Adrenal gland (tissue), 19 donors: ENCODE measurements at regions of chr5 and their contacts with region 1.

Region 1: DNA sequence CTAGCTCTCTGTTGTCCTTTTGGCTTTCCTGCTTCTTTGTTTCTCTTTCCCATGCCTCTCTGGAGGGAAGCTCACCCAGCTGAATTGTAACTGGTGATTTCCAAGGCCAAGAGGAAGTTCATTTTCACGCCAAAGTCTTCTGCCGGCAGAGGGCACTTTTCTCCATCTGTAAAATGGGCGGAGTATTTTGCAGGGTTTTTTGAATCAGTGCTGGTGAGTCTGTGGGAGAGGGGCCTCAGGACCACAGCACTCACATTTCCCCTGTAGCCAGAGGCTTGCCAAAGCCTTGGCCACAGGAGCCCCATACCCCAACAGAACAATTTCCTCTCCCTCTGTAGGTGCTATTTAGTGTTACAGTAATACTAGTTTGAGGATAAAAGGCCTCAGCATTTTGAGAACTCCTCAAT is 42.3 kb upstream of the MATR3 start:
- DNase-seq: no peak
- H3K4me3 ChIP-seq: no peak overlapping the region
- H3K27ac ChIP-seq: no peak overlapping the region
- H3K4me1 ChIP-seq: no peaks in the 10 kb centered on the region
- H3K27me3 ChIP-seq: no peaks in the 10 kb centered on the region
- CTCF ChIP-seq: peak in 3 of 6 experiments; percentile 16 to 24 (median 20)
- POLR2A ChIP-seq: no peak

Region 2: GRCh38 chr5:138967791-138968448 is 283.4 kb before region 1 on chr5:
- intact Hi-C with region 1: no loop called
- DNase-seq: no peak
- H3K4me3 ChIP-seq: no peak overlapping the region
- H3K27ac ChIP-seq: peak overlapping the region in 1 of 5 donors; percentile 20
- H3K4me1 ChIP-seq: peaks cover 32 to 51% of the 10 kb centered on the region in 2 donors
- H3K27me3 ChIP-seq: no peaks in the 10 kb centered on the region
- CTCF ChIP-seq: no peak
- POLR2A ChIP-seq: no peak

Region 3: GRCh38 chr5:139091439-139092156 is 159.7 kb before region 1 on chr5:
- intact Hi-C with region 1: loop called in 1 of 2 experiments (anchors 10 kb)
- DNase-seq: peak in 2 of 7 donors; percentile 27 to 32
- H3K4me3 ChIP-seq: no peak overlapping the region
- H3K27ac ChIP-seq: no peak overlapping the region
- H3K4me1 ChIP-seq: peaks cover 0 to 16% of the 10 kb centered on the region in 2 donors
- H3K27me3 ChIP-seq: no peaks in the 10 kb centered on the region
- CTCF ChIP-seq: peak in 4 of 6 experiments; percentile 21 to 44 (median 39)
- POLR2A ChIP-seq: no peak

Region 4: DNA sequence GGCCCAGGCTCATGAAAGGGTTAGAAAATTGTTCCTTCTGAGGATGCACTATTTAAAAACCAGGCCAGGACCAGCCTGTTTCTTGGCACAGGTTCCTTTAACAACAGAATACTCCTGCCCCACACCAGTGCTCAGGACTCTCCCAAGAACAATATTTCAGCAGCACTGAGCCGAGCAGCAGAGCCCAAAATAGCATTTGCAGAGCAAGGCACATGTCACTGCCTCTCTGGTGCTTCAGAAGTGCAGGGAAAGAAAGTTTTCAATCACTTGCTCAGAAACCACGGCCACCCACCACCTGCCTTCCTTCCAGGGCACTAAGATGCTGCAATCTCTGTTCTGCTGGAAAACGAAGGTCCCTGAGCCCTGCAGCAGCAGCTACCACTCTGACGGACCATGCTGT is 130.8 kb before region 1 on chr5:
- intact Hi-C with region 1: no loop called
- DNase-seq: peak in 1 of 7 donors; percentile 29
- H3K4me3 ChIP-seq: no peak overlapping the region
- H3K27ac ChIP-seq: no peak overlapping the region
- H3K4me1 ChIP-seq: peaks cover 0 to 1% of the 10 kb centered on the region in 2 donors
- H3K27me3 ChIP-seq: no peaks in the 10 kb centered on the region
- CTCF ChIP-seq: no peak
- POLR2A ChIP-seq: no peak

Region 5: DNA sequence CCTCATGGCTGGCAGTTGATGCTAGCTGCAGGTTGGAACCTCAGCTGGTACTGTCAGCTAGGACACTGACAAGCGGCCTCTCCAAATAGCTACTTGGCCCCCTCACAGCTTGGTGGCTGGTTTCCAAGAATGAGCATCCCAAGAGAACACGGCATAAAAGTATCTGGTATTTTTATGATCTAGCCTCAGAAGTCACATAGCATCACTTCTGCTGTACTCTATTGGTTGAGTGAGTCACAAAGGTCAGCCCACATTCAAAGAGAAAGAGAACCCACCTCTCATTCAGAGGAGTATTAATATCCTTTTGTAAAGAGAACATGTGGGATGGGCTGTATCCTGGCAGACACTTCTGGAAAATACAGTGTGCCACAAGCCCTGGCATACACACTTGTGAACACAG is 47.1 kb before region 1 on chr5:
- intact Hi-C with region 1: loop called in 1 of 2 experiments (anchors 10 kb)
- DNase-seq: no peak
- H3K4me3 ChIP-seq: no peak overlapping the region
- H3K27ac ChIP-seq: no peak overlapping the region
- H3K4me1 ChIP-seq: peaks cover 0 to under 1% of the 10 kb centered on the region in 2 donors
- H3K27me3 ChIP-seq: no peaks in the 10 kb centered on the region
- CTCF ChIP-seq: no peak
- POLR2A ChIP-seq: no peak